ENCODE measurements at regions of chr17 and their contacts with region 1.

Region 1: GRCh38 chr17:29293890-29294579 is at the start of gene NUFIP2:
- DNase-seq: peak; percentile 99
- H3K4me3 Mint-ChIP-seq: peak within 1 kb of the TSS; percentile 100
- H3K27ac Mint-ChIP-seq: peak within 1 kb of the TSS; percentile 99
- H3K4me1 Mint-ChIP-seq: peaks cover 25% of the 10 kb centered on the region
- H3K27me3 Mint-ChIP-seq: no peaks in the 10 kb centered on the region
- total RNA-seq, gene NUFIP2: 51.0 to 57.8 TPM

Region 2: GRCh38 chr17:29124117-29124924 is 169.7 kb before region 1 on chr17:
- CTCF ChIA-PET with region 1: no interaction called
- intact Hi-C with region 1: no loop called
- DNase-seq: peak; percentile 68
- H3K4me3 Mint-ChIP-seq: no peak overlapping the region
- H3K27ac Mint-ChIP-seq: no peak overlapping the region
- H3K4me1 Mint-ChIP-seq: peaks cover 2% of the 10 kb centered on the region
- H3K27me3 Mint-ChIP-seq: no peaks in the 10 kb centered on the region

Region 3: DNA sequence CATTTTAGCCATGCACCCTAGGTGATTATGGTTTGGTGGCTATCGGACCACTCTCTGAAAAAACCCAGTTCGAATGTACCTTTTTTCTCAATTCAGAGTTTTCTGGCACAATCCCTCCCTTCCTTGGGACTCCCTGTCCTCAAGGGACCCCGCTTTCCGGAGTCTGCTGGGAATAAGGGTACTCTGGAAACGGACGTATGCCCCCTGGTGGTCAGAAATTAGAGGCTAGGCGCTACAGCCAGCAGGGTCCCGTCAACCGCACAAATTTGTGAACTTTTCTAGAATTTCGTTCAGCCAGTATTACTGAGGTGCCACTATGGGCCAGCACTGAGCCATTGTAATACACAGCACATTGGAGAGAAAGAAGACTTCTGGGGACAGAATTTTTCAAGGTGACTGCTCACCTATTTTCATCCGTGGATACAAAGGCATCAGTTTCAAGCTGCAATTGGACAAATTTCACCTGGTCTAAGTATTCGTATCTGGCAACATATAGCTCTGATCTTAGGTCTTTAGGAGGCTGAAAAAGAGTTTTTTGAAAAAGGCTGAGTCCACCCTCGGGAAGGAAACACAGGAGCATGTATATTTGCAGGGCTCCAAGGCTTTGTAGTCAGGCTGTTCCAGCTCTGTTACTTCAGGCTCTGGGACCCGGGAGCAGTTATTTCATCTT is 74.5 kb before region 1 on chr17:
- CTCF ChIA-PET with region 1: interaction called, 6 read pairs
- intact Hi-C with region 1: loop called (anchors 1 kb)
- DNase-seq: peak; percentile 85
- H3K4me3 Mint-ChIP-seq: no peak overlapping the region
- H3K27ac Mint-ChIP-seq: no peak overlapping the region
- H3K4me1 Mint-ChIP-seq: peaks cover 4% of the 10 kb centered on the region
- H3K27me3 Mint-ChIP-seq: no peaks in the 10 kb centered on the region

Region 4: DNA sequence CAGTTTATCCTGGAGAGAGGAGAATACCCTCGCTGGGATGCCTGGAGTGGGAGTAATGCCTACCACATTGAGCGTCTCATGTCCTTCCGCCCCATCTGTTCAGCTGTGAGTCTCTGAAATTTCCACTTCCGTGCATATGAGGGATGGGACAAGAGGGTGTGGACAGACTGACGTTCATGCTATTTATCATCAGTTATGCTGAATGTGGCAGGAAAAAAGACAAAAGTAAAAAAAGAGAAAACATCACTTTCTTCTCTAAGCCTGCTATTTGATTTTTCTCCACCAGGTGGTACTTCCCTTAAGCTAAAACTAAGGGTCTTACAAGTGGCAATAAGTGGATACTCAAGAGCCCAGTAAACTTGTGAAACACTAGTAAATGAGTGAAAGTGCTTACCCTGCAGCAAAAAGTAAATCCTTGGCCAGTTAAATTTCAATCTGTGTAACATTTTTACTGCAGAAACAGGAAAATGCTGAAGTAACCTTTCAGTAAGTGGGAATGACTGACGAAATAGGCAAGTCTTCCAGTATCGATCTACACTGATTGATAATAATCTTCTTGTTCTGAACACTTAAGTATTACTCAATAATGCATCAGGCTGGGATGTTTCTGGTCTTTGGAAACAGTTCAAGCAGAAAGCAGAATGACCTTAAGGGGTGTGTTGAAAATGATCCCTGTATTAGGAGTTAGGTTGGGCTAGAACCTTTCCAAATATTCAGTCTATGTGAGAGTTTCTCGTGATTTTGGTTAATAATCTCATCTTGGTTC is 41.8 kb before region 1 on chr17:
- CTCF ChIA-PET with region 1: interaction called, 7 read pairs
- intact Hi-C with region 1: loop called (anchors 2 kb)
- DNase-seq: no peak
- H3K4me3 Mint-ChIP-seq: no peak overlapping the region
- H3K27ac Mint-ChIP-seq: no peak overlapping the region
- H3K4me1 Mint-ChIP-seq: peaks cover 11% of the 10 kb centered on the region
- H3K27me3 Mint-ChIP-seq: no peaks in the 10 kb centered on the region

Region 5: GRCh38 chr17:29389982-29390850 is 96.2 kb after region 1 on chr17 and contains the start of gene TAOK1:
- CTCF ChIA-PET with region 1: no interaction called
- intact Hi-C with region 1: loop called (anchors 1 kb)
- DNase-seq: peak; percentile 99
- H3K4me3 Mint-ChIP-seq: peak within 1 kb of the TSS; percentile 94
- H3K27ac Mint-ChIP-seq: peak within 1 kb of the TSS; percentile 88
- H3K4me1 Mint-ChIP-seq: peaks cover 44% of the 10 kb centered on the region
- H3K27me3 Mint-ChIP-seq: no peaks in the 10 kb centered on the region
- total RNA-seq, gene TAOK1: 21.8 to 21.9 TPM

Region 6: GRCh38 chr17:29589524-29590410 is 295.7 kb after region 1 on chr17 and contains the start of gene GIT1:
- CTCF ChIA-PET with region 1: no interaction called
- intact Hi-C with region 1: loop called (anchors 5 kb)
- DNase-seq: peak; percentile 84
- H3K4me3 Mint-ChIP-seq: peak within 1 kb of the TSS; percentile 93
- H3K27ac Mint-ChIP-seq: peak within 1 kb of the TSS; percentile 88
- H3K4me1 Mint-ChIP-seq: peaks cover 70% of the 10 kb centered on the region
- H3K27me3 Mint-ChIP-seq: no peaks in the 10 kb centered on the region
- total RNA-seq, gene GIT1: 35.5 to 37.5 TPM